Mammary epithelial cell (primary cell): ENCODE measurements at regions of chr4 and their contacts with region 1.

Region 1: DNA sequence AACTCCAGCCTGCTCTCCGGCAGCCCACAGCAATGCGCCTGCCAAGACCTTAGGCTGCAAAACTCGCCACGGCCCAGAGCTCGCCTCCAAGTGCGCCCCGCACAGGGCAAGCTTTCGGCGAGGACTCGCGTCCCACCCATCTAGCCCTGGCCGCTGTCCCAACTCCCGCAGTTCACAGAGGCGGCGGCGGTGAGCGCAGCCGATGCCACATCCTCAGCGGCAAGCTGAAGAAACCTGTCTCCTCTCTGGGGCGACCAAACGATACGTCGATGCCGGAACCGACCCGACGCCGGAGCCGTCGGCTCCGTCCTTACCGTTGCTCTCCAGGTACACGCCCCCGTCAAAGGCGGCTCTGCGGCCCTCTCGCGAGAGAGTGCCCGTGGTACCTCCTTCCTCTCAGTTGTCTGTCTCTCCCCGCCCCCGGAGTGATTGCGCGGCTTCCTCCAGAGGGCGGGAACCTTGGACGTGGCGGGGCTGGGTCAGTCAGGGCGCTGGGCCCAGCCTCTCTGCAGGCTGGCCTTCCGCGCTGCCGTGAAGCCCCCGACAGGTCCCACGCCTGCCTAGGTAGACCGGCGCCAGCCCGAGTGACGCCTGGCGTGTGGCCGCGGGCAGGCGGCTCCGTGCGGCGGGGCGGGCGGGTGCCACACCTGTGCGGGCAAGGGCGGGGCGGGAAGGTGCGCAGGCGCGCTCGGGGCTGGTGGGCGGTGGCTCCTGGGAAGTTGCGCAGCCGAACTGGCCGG is 380 bp upstream of the RAB33B start:
- DNase-seq: peak; percentile 97
- H3K4me3 ChIP-seq: peak overlapping the region; percentile 65 to 97 (median 84)
- H3K27ac ChIP-seq: peak overlapping the region; percentile 75
- H3K4me1 ChIP-seq: peaks cover 14% of the 10 kb centered on the region
- H3K27me3 ChIP-seq: no peaks in the 10 kb centered on the region
- CTCF ChIP-seq: no peak

Region 2: DNA sequence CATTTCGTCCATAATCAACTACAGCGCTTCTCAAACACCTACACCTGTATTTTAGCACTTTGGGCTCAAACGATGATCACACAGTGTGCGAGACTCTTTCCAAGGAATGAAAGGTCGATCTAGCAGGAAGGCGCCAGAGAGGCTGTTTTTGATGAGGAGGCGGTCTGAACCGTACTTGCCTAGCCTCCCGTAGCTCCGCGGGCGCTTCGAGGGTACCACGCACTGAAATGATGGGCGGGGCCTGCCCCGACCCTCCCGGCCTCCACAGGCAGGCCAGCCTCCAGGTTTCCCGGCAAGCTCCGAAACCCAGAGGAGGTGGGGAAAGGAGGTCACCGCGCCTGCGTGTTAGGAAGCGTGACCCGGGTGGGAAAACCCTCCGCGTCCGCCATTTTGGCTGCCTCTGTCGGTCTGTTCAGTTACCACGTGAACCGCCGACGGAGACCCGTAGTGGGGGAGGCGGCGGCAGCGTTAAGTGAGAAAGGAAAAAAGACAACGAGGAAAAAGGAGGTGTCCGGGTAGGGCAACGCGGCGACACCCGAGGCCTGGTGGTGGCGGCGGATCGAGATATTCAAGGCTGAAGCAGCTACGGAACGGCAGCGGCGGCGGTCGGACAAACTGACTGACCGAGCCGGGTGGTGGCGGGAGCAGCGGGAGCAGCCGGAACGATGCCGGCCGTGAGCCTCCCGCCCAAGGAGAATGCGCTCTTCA is 152.3 kb before region 1 on chr4 and contains the start of gene NAA15:
- CTCF ChIA-PET with region 1: no interaction called
- dilution Hi-C with region 1: no loop called
- in situ Hi-C with region 1: no loop called
- intact Hi-C with region 1: loop called (anchors 2 kb)
- DNase-seq: peak; percentile 97
- H3K4me3 ChIP-seq: peak within 1 kb of the TSS; percentile 76 to 94 (median 94)
- H3K27ac ChIP-seq: peak within 1 kb of the TSS; percentile 80
- H3K4me1 ChIP-seq: peaks cover 25% of the 10 kb centered on the region
- H3K27me3 ChIP-seq: no peaks in the 10 kb centered on the region
- CTCF ChIP-seq: no peak
- total RNA-seq, gene NAA15: 35.5 to 76.3 TPM

Region 3: GRCh38 chr4:139416073-139416673 is 37.4 kb before region 1 on chr4:
- CTCF ChIA-PET with region 1: no interaction called
- dilution Hi-C with region 1: no loop called
- in situ Hi-C with region 1: no loop called
- intact Hi-C with region 1: loop called (anchors 1 kb)
- DNase-seq: no peak
- H3K4me3 ChIP-seq: no peak overlapping the region
- H3K27ac ChIP-seq: no peak overlapping the region
- H3K4me1 ChIP-seq: peaks cover 20% of the 10 kb centered on the region
- H3K27me3 ChIP-seq: no peaks in the 10 kb centered on the region
- CTCF ChIP-seq: peak; percentile 50 to 60

Region 4: DNA sequence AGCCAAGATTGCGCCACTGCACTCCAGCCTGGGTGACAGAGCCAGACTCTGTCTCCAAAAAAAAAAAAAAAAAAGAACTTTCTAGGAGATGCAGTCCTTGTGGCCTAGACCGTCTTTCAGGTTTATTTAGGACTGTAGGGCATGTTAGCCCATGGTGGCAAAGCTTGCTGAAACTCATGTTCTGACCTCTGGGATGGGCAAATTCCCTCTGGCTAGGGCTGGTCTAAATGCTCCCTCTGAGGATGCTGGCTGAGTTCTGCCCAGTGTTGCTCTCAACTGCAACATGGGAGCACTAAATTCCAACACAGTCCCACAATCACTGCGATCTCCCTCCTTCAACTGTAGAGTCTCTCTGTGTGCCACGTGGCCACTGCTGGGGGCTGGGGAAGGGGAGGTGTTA is 19.8 kb before region 1 on chr4:
- CTCF ChIA-PET with region 1: no interaction called
- dilution Hi-C with region 1: no loop called
- in situ Hi-C with region 1: no loop called
- intact Hi-C with region 1: loop called (anchors 2 kb)
- DNase-seq: no peak
- H3K4me3 ChIP-seq: no peak overlapping the region
- H3K27ac ChIP-seq: no peak overlapping the region
- H3K4me1 ChIP-seq: no peaks in the 10 kb centered on the region
- H3K27me3 ChIP-seq: no peaks in the 10 kb centered on the region
- CTCF ChIP-seq: no peak

Region 5: DNA sequence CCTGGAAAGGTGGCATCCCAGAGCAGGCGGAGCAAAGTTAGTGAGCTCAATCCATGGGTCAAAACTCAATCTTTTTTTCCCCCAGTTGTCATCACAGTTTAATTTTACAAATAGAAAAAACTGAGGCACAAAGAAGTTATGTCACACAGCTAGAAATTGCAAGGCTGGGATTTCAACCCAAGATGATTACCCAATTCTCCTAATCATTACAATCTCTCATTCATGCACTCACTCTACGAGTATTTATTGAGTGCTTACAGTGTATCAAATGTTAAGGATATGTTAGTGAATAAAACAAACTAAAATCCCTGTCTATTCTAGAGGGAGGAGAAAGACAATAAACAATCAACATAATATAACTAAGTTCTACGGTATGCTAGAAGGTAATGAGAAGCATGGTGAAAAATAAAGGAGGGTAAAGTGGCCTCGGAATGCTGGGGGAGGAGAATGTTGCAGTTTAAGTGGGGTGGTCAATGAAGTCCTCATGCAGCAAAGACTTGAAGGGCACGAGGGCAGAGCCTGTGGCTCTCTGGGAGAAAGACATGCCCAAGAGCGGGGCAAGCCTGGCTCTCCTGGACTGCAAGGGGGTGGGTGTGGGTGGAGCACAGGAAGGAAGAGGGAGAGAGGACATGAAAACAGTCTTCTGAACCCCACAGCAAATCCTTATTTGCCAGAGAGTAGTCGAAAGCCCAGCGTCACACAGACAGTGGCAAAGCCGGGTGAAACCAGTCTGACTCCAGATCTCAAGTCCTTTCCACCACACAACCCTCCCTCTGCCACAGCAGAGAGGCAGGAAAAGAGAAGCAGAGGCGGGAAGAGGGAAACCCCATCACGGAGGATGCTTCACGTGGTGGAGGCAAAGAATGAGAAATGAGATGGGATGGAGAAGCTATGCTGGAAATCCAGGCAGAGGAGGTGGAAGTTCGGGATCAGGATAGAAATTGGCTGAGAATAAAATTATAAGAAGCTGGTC is 48.7 kb after region 1 on chr4:
- CTCF ChIA-PET with region 1: interaction called, 10 read pairs
- dilution Hi-C with region 1: no loop called
- in situ Hi-C with region 1: no loop called
- intact Hi-C with region 1: no loop called
- DNase-seq: no peak
- H3K4me3 ChIP-seq: no peak overlapping the region
- H3K27ac ChIP-seq: no peak overlapping the region
- H3K4me1 ChIP-seq: no peaks in the 10 kb centered on the region
- H3K27me3 ChIP-seq: no peaks in the 10 kb centered on the region
- CTCF ChIP-seq: no peak

Region 6: GRCh38 chr4:139530833-139531427 is 77.4 kb after region 1 on chr4:
- CTCF ChIA-PET with region 1: no interaction called
- dilution Hi-C with region 1: no loop called
- in situ Hi-C with region 1: no loop called
- intact Hi-C with region 1: loop called (anchors 2 kb)
- DNase-seq: peak; percentile 29
- H3K4me3 ChIP-seq: no peak overlapping the region
- H3K27ac ChIP-seq: no peak overlapping the region
- H3K4me1 ChIP-seq: peaks cover 10% of the 10 kb centered on the region
- H3K27me3 ChIP-seq: no peaks in the 10 kb centered on the region
- CTCF ChIP-seq: peak; percentile 53 to 66